ENCODE measurements at regions of chr10 and their contacts with region 1.

Region 1: GRCh38 chr10:12121673-12122072 is 7.8 kb upstream of the SEC61A2 start:
- DNase-seq: no peak
- H3K4me3 Mint-ChIP-seq: no peak overlapping the region
- H3K27ac Mint-ChIP-seq: peak overlapping the region; percentile 96
- H3K4me1 Mint-ChIP-seq: peaks cover 26% of the 10 kb centered on the region
- H3K27me3 Mint-ChIP-seq: no peaks in the 10 kb centered on the region

Region 2: GRCh38 chr10:11863353-11864109 is 258.1 kb before region 1 on chr10:
- intact Hi-C with region 1: loop called (anchors 1 kb)
- DNase-seq: peak; percentile 69
- H3K4me3 Mint-ChIP-seq: no peak overlapping the region
- H3K27ac Mint-ChIP-seq: peak overlapping the region; percentile 48
- H3K4me1 Mint-ChIP-seq: peaks cover 21% of the 10 kb centered on the region
- H3K27me3 Mint-ChIP-seq: peaks cover 67% of the 10 kb centered on the region

Region 3: GRCh38 chr10:12042797-12043651 is 78.6 kb before region 1 on chr10 and contains the start of gene UPF2:
- intact Hi-C with region 1: loop called (anchors 1 kb)
- DNase-seq: peak; percentile 95
- H3K4me3 Mint-ChIP-seq: peak within 1 kb of the TSS; percentile 99
- H3K27ac Mint-ChIP-seq: peak within 1 kb of the TSS; percentile 96
- H3K4me1 Mint-ChIP-seq: peaks cover 23% of the 10 kb centered on the region
- H3K27me3 Mint-ChIP-seq: no peaks in the 10 kb centered on the region
- total RNA-seq, gene UPF2: 41.0 and 41.4 TPM in 2 replicates

Region 4: DNA sequence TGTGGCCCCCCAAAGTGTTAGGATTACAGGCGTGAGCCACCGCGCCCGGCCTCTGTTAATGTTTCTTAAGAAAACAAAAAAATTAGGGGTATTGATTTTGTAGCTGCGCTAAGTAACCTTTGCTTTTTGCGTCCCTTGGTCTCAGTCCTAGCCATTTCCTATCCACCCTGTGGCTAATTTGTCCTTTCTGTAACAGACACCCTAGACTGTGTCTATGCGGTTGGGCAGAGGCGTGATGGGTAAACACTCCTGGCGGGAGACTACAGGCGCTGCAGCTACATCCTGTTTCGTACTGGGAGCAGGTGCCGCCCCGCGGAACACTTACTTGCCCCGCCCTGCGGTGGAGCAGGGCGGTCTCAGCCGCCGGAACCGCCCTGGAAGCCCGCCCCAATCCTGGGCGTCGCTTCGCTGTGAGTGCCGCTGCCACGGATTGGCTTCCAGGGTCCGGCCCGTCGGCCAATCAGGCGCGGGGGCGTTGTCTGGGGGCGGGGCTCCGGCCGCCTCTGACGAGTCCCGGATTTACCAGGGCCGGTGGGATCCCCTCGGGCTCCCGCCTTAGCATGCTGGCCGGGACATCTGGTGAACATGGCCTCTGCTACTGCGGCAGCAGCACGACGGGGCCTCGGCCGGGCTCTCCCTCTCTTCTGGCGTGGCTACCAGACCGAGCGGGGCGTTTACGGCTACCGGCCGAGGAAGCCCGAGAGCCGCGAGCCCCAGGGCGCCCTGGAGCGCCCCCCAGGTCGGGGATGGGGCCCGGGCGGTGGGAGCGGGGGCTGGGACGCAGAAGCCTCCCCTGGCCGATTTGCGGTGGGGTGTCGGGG is 53.0 kb before region 1 on chr10 and contains the start of gene DHTKD1:
- intact Hi-C with region 1: loop called (anchors 2 kb)
- DNase-seq: peak; percentile 99
- H3K4me3 Mint-ChIP-seq: peak within 1 kb of the TSS; percentile 77
- H3K27ac Mint-ChIP-seq: peak within 1 kb of the TSS; percentile 86
- H3K4me1 Mint-ChIP-seq: peaks cover 16% of the 10 kb centered on the region
- H3K27me3 Mint-ChIP-seq: peaks cover 2% of the 10 kb centered on the region
- total RNA-seq, gene DHTKD1: 20.6 and 21.1 TPM in 2 replicates

Region 5: GRCh38 chr10:12103802-12104201 is 17.9 kb before region 1 on chr10:
- intact Hi-C with region 1: no loop called
- DNase-seq: no peak
- H3K4me3 Mint-ChIP-seq: no peak overlapping the region
- H3K27ac Mint-ChIP-seq: no peak overlapping the region
- H3K4me1 Mint-ChIP-seq: no peaks in the 10 kb centered on the region
- H3K27me3 Mint-ChIP-seq: no peaks in the 10 kb centered on the region

Region 6: DNA sequence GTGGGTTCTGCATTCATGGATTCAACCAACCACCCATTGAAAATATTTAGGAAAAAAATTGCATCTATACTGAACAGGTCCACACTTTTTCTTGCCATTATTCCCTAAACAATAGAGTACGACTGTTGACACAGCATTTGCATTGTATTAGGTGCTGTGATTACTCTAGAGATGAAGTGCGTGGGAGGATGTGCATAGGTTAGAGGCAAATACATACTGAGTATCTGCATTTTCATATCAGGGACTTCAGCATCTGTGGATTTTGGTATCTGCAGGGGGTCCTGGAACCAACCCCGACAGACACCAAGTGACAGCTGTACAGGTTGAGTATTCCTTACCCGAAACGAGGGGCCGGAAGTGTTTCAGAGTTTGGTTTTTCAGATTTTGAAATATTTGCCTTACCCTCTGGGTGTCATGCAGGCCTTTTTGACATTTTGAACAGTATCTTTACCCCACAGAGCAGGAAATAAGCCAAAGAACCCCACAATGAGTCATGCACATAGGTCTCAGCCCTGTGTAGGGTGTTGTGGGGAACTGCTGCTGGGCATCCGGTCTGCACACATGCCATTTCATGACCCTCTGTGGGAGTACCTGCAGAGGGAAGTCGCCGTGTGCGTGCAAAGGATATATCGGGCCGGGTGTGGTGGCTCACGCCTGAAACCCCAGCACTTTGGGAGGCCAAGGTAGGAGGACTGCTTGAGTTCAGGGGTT is 59.5 kb after region 1 on chr10:
- intact Hi-C with region 1: loop called (anchors 1 kb)
- DNase-seq: peak; percentile 69
- H3K4me3 Mint-ChIP-seq: peak overlapping the region; percentile 13
- H3K27ac Mint-ChIP-seq: peak overlapping the region; percentile 88
- H3K4me1 Mint-ChIP-seq: peaks cover 26% of the 10 kb centered on the region
- H3K27me3 Mint-ChIP-seq: no peaks in the 10 kb centered on the region

Region 7: DNA sequence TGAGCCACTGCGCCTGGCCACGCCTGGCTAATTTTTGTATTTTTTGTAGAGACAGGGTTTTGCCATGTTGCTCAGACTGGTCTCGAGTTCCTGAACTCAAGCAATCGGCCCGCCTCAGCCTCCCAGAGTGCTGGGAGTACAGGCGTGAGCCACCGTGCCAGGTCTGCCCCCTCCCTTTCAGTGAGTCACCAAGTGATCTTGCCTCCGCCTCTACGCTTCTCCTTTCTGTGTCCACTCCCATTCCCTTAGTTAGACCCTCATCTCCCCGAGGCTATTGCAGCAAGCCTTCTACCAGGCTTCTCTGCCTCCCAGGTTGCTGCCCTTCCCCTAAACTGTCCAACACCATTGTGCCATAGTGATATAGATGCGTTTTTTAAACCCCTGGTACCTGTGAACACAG is 107.2 kb after region 1 on chr10:
- intact Hi-C with region 1: no loop called
- DNase-seq: no peak
- H3K4me3 Mint-ChIP-seq: no peak overlapping the region
- H3K27ac Mint-ChIP-seq: no peak overlapping the region
- H3K4me1 Mint-ChIP-seq: no peaks in the 10 kb centered on the region
- H3K27me3 Mint-ChIP-seq: no peaks in the 10 kb centered on the region

Measured in activated T-helper 2 cell treated with anti-CD3 and anti-CD28 coated beads, Interferon-gamma antibody, Interleukin-2, Interleukin-4, amounts not matched to agents 10 μg/mL and 5 μg/mL and 100 μg/mL, durations not matched to agents 14 hours and 24 hours and 36 hours (primary cell).